Gastrocnemius medialis (tissue), 4 donors: ENCODE measurements at regions of chr4 and their contacts with region 1.

Region 1: GRCh38 chr4:47914220-47914925 is at the start of gene NFXL1:
- DNase-seq: peak; percentile 96 to 98
- ATAC-seq: peak; percentile 99
- H3K4me3 ChIP-seq: peak within 1 kb of the TSS; percentile 79 to 92 (median 84)
- H3K27ac ChIP-seq: peak within 1 kb of the TSS; percentile 75 to 84 (median 80)
- H3K4me1 ChIP-seq: peaks cover 11 to 12% of the 10 kb centered on the region in 2 donors
- H3K27me3 ChIP-seq: no peaks in the 10 kb centered on the region
- CTCF ChIP-seq: no peak
- POLR2A ChIP-seq: peak; percentile 81 to 82
- total RNA-seq, gene NFXL1: 3.7 to 10.8 (median 5.5) TPM

Region 2: DNA sequence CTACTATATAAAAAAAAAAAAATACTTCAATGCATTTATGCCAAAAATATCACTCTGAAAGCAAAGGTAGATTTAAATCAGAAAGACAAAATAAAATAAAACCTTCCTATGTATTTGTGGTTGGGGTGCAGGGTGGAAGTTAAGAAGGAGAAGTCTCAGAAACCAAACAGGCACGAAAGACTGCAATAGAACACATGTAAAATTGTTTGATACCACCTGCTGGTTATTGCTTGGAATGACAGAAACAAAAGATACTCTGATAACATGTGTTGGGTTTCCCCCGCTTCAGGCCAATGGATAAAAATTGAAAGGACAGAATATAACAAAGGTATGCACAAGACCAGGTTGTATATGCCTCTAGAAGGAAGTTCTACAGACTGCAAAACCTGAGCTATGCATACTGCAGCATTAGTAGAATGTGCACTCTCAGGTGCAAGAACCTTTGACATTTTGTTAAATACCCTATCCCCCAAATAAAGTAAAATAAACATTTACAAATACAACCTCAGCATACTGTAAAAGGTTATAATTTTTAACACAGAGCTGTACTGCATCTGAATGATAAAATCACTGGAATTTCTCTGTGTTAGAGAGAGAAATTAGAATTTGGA is 1643.3 kb before region 1 on chr4:
- in situ Hi-C with region 1: no loop called
- intact Hi-C with region 1: no loop called
- DNase-seq: no peak
- ATAC-seq: no peak
- H3K4me3 ChIP-seq: no peak overlapping the region
- H3K27ac ChIP-seq: no peak overlapping the region
- H3K4me1 ChIP-seq: no peaks in the 10 kb centered on the region
- H3K27me3 ChIP-seq: no peaks in the 10 kb centered on the region
- CTCF ChIP-seq: no peak
- POLR2A ChIP-seq: no peak

Region 3: DNA sequence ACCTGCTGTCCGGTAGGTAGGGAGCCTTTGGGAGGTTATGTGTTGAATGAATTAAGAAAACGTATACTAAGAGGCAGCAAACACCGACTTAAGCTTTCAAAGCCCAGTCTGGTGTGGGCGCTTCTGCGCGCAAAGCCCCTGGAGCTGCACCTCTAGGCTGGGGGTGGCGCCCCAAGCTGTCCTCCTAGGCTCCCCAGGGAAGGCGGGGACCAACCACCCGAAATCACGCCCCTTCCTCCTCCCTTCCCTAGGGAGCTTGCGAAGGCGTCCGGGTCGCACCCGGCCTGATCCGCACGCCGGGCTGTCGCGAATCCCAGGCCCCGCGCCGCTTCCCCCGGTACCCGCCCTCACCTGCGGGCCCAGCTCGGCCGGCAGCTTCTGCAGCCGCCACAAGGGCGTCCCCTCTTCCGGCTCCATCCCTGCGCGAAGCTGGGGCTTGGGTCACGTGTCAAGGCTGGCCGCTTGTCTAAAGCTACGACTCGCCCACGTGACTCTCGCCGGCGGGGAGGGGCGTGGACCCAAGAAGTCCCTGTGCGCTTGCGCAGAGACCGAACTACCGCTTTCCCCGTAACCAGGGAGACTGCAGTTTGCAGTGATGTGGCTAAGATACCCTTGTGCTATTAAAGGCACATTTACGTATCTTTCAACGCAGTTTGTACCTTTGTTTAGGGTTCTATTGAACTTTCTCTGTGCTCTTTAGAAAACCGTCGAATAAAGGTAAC is 451.0 kb before region 1 on chr4 and contains the start of gene COMMD8:
- in situ Hi-C with region 1: loop called in 1 of 4 experiments (anchors 25 kb)
- intact Hi-C with region 1: no loop called
- DNase-seq: peak; percentile 87 to 89
- ATAC-seq: peak; percentile 97 to 98
- H3K4me3 ChIP-seq: peak within 1 kb of the TSS; percentile 74 to 88 (median 85)
- H3K27ac ChIP-seq: peak within 1 kb of the TSS; percentile 65 to 81 (median 76)
- H3K4me1 ChIP-seq: peaks cover 0 to 12% of the 10 kb centered on the region in 2 donors
- H3K27me3 ChIP-seq: no peaks in the 10 kb centered on the region
- CTCF ChIP-seq: peak in 4 of 5 experiments; percentile 38 to 47 (median 42)
- POLR2A ChIP-seq: peak in 1 of 2 donors; percentile 6
- total RNA-seq, gene COMMD8: 4.8 to 8.5 (median 6.4) TPM

Region 4: GRCh38 chr4:47686294-47686872 is 228.0 kb before region 1 on chr4:
- in situ Hi-C with region 1: no loop called
- intact Hi-C with region 1: no loop called
- DNase-seq: peak in 1 of 2 donors; percentile 16
- ATAC-seq: no peak
- H3K4me3 ChIP-seq: no peak overlapping the region
- H3K27ac ChIP-seq: no peak overlapping the region
- H3K4me1 ChIP-seq: no peaks in the 10 kb centered on the region
- H3K27me3 ChIP-seq: no peaks in the 10 kb centered on the region
- CTCF ChIP-seq: peak in 3 of 5 experiments; percentile 11 to 57 (median 43)
- POLR2A ChIP-seq: no peak

Region 5: DNA sequence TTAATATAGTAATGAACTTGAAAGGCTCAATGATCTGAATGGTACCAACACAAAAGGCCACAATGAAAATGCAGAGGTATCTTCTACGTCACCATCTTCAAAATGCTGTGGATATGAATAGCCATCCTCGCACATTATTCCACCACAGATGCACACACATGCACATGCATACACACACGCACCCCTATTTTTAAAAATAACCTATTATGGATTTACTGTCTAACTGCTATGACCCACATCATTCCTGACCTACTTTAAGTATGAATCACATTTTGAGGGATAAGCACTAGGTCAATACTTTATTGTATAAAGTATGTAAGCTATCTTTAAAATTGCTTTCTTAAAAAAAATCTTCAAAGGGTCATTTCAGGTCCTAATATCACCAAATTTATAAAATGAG is 52.1 kb before region 1 on chr4:
- in situ Hi-C with region 1: no loop called
- intact Hi-C with region 1: no loop called
- DNase-seq: no peak
- ATAC-seq: no peak
- H3K4me3 ChIP-seq: no peak overlapping the region
- H3K27ac ChIP-seq: no peak overlapping the region
- H3K4me1 ChIP-seq: no peaks in the 10 kb centered on the region
- H3K27me3 ChIP-seq: no peaks in the 10 kb centered on the region
- CTCF ChIP-seq: no peak
- POLR2A ChIP-seq: no peak

Region 6: GRCh38 chr4:48027653-48028052 is 113.3 kb after region 1 on chr4:
- in situ Hi-C with region 1: no loop called
- intact Hi-C with region 1: loop called (anchors 5 kb)
- DNase-seq: no peak
- ATAC-seq: no peak
- H3K4me3 ChIP-seq: no peak overlapping the region
- H3K27ac ChIP-seq: no peak overlapping the region
- H3K4me1 ChIP-seq: peaks cover 5% of the 10 kb centered on the region in 2 donors
- H3K27me3 ChIP-seq: no peaks in the 10 kb centered on the region
- CTCF ChIP-seq: no peak
- POLR2A ChIP-seq: no peak

Region 7: DNA sequence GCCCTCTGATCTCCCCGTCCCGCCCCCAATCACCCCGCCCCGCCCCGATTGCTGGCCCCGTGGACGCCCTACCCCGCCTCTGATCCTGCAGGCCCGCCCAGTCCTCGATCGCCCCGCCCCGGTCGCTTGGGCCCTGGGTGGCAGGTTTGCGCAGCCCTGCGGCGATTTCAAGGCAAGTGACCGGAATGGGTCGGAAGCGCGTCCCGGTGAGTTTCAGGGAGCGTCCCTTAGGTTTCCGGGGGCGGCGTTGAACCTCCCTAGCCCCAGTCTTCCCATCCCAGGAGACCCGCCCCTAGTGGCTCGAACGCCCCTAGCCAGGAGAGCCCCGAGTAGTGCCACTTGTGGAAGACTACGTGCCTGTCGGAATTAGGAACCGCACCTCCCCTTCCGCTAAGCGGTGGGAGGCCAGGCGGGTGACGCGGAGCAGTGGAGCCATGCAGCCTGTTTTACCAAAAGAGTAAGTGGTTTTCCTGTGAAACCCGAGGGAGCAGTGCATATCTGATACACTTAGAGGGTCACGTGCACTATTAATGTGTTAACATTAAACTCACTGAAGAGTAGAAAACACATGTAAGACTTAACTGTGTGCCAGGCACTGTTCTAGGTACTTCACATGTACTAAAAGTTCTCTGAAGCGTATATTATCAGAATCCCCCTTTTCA is 355.6 kb after region 1 on chr4:
- in situ Hi-C with region 1: no loop called
- intact Hi-C with region 1: loop called (anchors 10 kb)
- DNase-seq: peak; percentile 90
- ATAC-seq: peak; percentile 91 to 92
- H3K4me3 ChIP-seq: peak overlapping the region; percentile 92 to 100 (median 94)
- H3K27ac ChIP-seq: peak overlapping the region; percentile 88 to 94 (median 92)
- H3K4me1 ChIP-seq: peaks cover 5% of the 10 kb centered on the region in 2 donors
- H3K27me3 ChIP-seq: no peaks in the 10 kb centered on the region
- CTCF ChIP-seq: peak in 3 of 5 experiments; percentile 15 to 25 (median 19)
- POLR2A ChIP-seq: peak; percentile 38 to 52

Region 8: GRCh38 chr4:48830706-48831531 is 916.5 kb after region 1 on chr4 and contains the start of gene OCIAD1:
- in situ Hi-C with region 1: no loop called
- intact Hi-C with region 1: loop called (anchors 5 kb)
- DNase-seq: peak; percentile 99
- ATAC-seq: peak; percentile 100
- H3K4me3 ChIP-seq: peak within 1 kb of the TSS; percentile 80 to 100 (median 92)
- H3K27ac ChIP-seq: peak within 1 kb of the TSS; percentile 95 to 96 (median 96)
- H3K4me1 ChIP-seq: peaks cover 17 to 22% of the 10 kb centered on the region in 2 donors
- H3K27me3 ChIP-seq: no peaks in the 10 kb centered on the region
- CTCF ChIP-seq: peak in 1 of 5 experiments; percentile 7
- POLR2A ChIP-seq: peak; percentile 38 to 47
- total RNA-seq, gene OCIAD1: 84.4 to 157 (median 126) TPM